Aorta (tissue), 5 donors: ENCODE measurements at regions of chr22 and their contacts with region 1.

Region 1: GRCh38 chr22:38755911-38756532 is at the start of gene SUN2:
- DNase-seq: peak; percentile 97 to 98
- ATAC-seq: peak; percentile 89
- H3K4me3 ChIP-seq: peak within 1 kb of the TSS; percentile 68 to 93
- H3K27ac ChIP-seq: peak within 1 kb of the TSS; percentile 96 to 97
- H3K4me1 ChIP-seq: no peaks in the 10 kb centered on the region
- H3K27me3 ChIP-seq: no peaks in the 10 kb centered on the region
- total RNA-seq, gene SUN2: 275 to 495 TPM

Region 2: DNA sequence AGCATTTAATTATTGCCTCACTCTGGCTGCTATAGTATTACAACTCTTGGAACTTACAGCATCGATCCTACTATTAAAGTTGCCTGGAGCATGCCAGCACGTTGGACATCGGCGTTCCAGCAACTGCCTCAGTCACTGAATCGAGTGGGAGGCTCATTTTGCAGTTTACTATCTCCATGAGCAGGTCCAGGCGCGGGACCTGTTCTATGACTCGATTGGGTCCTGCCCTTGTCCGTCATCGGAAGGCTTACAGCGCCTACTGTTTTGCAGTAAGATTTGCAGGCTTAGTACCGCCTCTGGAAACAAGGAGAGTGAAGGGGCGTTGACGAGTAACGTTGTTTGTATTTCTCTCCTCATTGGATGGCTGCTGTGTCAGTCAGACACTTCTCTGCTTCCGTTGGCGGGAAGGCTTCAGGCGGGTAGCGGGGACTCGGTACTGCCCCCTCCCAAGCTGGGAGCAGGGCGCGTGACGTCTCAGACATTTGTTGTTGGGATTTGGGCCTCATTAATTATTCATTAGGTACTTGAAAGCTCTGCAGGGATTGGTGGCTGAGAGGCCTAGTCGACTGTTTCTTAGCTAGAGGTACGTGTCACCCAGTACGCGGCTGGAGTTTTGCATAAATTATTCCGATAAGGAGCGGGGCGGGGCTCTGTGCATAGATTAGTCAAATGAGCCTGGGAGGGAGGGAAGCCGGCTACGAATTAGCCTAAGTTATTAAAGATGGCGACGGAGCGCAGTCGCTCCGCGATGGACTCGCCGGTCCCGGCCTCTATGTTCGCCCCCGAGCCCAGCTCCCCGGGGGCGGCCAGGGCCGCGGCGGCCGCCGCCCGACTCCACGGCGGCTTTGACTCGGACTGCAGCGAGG is 50.6 kb before region 1 on chr22 and contains the start of gene GTPBP1:
- intact Hi-C with region 1: loop called in 1 of 2 experiments (anchors 2 kb)
- DNase-seq: peak; percentile 97 to 99
- ATAC-seq: peak; percentile 95
- H3K4me3 ChIP-seq: peak within 1 kb of the TSS; percentile 94
- H3K27ac ChIP-seq: peak within 1 kb of the TSS; percentile 87 to 91
- H3K4me1 ChIP-seq: peaks cover 0 to 8% of the 10 kb centered on the region in 2 donors
- H3K27me3 ChIP-seq: no peaks in the 10 kb centered on the region
- total RNA-seq, gene GTPBP1: 49.5 to 59.2 TPM

Region 3: GRCh38 chr22:38718414-38718813 is 37.6 kb before region 1 on chr22:
- intact Hi-C with region 1: loop called in 1 of 2 experiments (anchors 5 kb)
- DNase-seq: peak; percentile 81 to 89
- ATAC-seq: peak; percentile 88
- H3K4me3 ChIP-seq: no peak overlapping the region
- H3K27ac ChIP-seq: peak overlapping the region in 1 of 2 donors; percentile 10
- H3K4me1 ChIP-seq: no peaks in the 10 kb centered on the region
- H3K27me3 ChIP-seq: no peaks in the 10 kb centered on the region

Region 4: DNA sequence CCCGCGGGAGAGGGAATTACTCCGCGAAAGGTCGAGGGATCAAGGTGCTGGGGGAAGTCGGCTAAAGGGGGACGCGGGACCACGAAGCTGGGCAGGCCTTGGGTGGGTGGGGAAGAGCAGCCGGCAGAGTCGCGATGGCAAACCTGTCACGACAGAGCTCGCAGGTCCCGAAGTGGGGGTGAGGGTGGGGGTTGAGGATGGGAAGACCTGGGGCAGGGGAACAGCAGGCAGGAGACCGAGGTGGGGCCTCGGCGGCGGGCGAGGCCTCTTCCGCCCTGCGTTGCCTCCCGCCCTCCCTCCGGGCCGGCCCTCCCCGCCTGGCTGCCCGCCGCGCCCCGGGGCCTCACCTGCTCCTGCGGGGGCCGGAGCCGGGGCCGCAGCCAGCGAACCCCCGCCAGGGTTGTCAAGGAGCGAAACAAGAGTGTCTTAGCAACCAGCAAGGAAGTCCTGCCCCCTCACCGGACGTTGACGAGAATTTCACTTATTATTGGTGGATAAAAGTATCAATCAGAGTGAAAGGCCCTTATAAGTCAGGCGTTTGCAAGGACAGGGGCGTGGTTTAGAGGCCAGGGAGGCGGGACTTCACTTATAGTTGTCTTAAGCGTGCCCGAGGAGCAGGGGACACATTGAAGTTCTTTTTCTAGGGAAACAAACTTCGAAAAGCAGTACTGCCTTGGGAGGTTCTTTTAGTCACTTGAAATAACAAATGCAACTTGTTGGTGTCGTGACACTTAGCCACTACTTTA is 37.9 kb after region 1 on chr22 and contains the start of gene DNAL4:
- intact Hi-C with region 1: loop called in 1 of 2 experiments (anchors 5 kb)
- DNase-seq: peak; percentile 95 to 98
- ATAC-seq: peak; percentile 96
- H3K4me3 ChIP-seq: peak within 1 kb of the TSS; percentile 92 to 97
- H3K27ac ChIP-seq: peak within 1 kb of the TSS in 1 of 2 donors; percentile 37
- H3K4me1 ChIP-seq: peaks cover 0 to 2% of the 10 kb centered on the region in 2 donors
- H3K27me3 ChIP-seq: no peaks in the 10 kb centered on the region
- total RNA-seq, gene DNAL4: 8.2 to 10.8 TPM